ENCODE measurements at regions of chr1 and their contacts with region 1.

Region 1: DNA sequence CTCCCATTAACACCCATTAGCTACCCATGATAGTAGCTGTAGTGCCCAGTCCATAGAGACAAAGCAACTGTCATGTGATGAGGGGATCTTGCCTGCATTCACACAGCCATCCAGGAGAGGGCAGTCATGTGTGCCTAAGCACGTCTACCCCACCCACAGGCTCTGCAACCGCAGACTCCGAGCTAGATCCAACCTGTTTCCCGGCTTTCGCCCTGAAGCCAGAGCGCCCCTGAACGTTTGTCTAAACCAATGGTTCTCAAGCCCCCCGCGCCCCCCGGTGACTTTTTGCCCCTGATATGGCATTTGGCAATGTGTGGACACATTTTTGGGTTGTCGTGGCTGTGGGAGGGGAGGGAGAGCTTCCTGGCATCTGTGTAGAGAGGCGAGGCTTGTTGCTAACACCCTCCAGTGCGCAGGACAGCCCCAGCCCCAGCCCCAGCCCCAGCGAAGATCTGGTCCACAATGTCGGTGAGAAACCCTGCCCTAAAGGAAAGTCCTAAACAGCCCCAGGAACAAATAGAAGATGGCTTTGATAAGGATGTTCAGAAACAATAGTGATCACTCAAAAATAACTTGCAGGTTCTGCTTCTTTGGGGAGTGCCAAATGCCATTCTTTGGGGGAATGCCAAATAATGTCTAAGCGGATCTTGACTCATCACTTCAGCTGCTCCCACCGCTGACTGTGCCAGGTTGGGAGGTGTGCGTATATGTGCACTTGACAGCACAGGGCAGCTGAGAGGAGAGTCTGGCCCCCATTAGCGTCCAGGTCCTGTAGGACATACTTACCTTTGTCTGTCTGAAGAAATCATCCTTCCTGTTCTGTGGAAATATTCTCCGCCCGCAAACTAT is 34.5 kb downstream of the SLC44A3 start:
- DNase-seq: peak; percentile 94
- H3K4me3 ChIP-seq: peak overlapping the region in 2 of 3 experiments; percentile 20 to 27
- H3K27ac ChIP-seq: peak overlapping the region; percentile 57
- H3K4me1 ChIP-seq: peaks cover 16% of the 10 kb centered on the region
- H3K27me3 ChIP-seq: peaks cover 0 to 1% of the 10 kb centered on the region in 2 experiments
- CTCF ChIP-seq: peak; percentile 90 to 93
- POLR2A ChIP-seq: peak; percentile 48

Region 2: GRCh38 chr1:94522304-94522703 is 332.4 kb before region 1 on chr1:
- CTCF ChIA-PET with region 1: interaction called, 12 read pairs
- POLR2A ChIA-PET with region 1: no interaction called
- dilution Hi-C with region 1: no loop called
- intact Hi-C with region 1: no loop called
- DNase-seq: peak; percentile 52
- H3K4me3 ChIP-seq: no peak overlapping the region
- H3K27ac ChIP-seq: no peak overlapping the region
- H3K4me1 ChIP-seq: no peaks in the 10 kb centered on the region
- H3K27me3 ChIP-seq: no peaks in the 10 kb centered on the region
- CTCF ChIP-seq: peak in 1 of 2 donors; percentile 28
- POLR2A ChIP-seq: no peak

Region 3: DNA sequence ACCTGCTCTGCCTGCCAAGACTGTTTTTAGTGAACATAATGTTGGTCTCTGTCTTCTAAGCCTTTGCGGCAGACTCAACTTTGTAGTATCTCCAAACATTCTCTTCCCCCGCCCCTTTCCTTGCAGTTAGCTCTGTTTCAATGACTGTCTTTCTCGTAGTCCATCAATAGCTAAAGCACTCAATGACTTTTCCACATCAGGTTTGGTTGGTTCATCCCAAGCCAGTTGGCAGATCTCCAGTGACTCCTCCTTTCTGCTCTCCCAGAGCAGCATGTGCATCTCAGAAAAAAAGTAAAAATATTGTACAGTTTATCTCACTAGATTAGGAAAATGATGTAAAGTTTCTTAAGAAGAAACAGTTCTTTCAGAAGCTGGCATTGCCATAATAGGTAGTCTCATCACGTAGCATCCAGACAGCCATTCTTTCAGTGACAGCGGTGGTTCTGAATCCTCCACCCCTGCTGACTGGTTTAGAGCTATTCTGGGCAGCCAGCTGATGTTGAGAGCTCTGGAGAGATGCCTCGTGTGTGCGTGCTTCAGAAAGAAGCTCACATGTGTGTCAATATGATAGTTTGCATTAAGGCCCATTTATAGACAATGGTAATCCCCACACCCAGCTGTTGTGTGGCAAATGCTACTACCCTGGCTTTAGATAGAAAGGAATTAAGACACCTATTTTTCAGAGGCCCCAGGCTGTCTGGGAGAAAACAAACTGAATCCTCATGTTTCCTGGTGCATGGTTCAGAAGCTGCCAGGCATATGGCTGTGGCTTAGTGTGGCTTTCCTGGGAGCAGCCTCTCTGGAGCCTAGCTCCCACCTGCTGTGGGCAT is 19.1 kb after region 1 on chr1:
- CTCF ChIA-PET with region 1: interaction called, 39 read pairs
- POLR2A ChIA-PET with region 1: no interaction called
- dilution Hi-C with region 1: no loop called
- intact Hi-C with region 1: no loop called
- DNase-seq: no peak
- H3K4me3 ChIP-seq: no peak overlapping the region
- H3K27ac ChIP-seq: no peak overlapping the region
- H3K4me1 ChIP-seq: peaks cover 29% of the 10 kb centered on the region
- H3K27me3 ChIP-seq: no peaks in the 10 kb centered on the region
- CTCF ChIP-seq: no peak
- POLR2A ChIP-seq: no peak

Region 4: GRCh38 chr1:94903280-94904009 is 48.8 kb after region 1 on chr1:
- CTCF ChIA-PET with region 1: interaction called, 22 read pairs
- POLR2A ChIA-PET with region 1: interaction called, 3 read pairs
- dilution Hi-C with region 1: no loop called
- intact Hi-C with region 1: no loop called
- DNase-seq: no peak
- H3K4me3 ChIP-seq: no peak overlapping the region
- H3K27ac ChIP-seq: no peak overlapping the region
- H3K4me1 ChIP-seq: peaks cover 3% of the 10 kb centered on the region
- H3K27me3 ChIP-seq: no peaks in the 10 kb centered on the region
- CTCF ChIP-seq: no peak
- POLR2A ChIP-seq: no peak

Region 5: DNA sequence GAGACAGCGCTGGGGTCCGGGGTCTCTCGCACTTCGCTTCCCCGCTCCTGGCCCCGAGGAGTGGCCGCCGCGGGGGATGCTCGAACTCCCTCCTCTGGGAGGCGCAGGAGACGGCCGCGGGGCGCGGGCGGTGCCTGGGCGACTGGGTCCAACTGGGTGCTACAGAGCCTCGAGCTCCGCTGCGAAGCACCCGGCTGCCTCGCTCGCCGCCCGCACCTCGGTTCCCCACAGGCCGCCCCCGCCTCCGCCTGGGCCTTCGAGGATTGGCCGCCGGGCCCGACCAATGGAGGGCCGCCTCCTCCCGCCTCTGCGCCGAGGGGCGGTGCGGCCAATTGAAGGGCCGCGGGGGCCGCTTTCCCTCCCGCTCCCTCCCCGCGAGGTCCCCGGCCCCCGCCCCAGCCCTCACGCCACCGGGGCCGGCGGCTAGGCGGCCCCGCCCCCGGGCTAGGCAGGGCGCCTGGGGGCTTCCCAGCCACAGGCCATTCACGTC is 72.3 kb after region 1 on chr1 and contains the start of gene CNN3:
- CTCF ChIA-PET with region 1: interaction called, 52 read pairs
- POLR2A ChIA-PET with region 1: interaction called, 6 read pairs
- dilution Hi-C with region 1: no loop called
- intact Hi-C with region 1: loop called (anchors 1 kb)
- DNase-seq: peak; percentile 93
- H3K4me3 ChIP-seq: peak within 1 kb of the TSS; percentile 75 to 99 (median 90)
- H3K27ac ChIP-seq: peak within 1 kb of the TSS; percentile 100
- H3K4me1 ChIP-seq: peaks cover 49% of the 10 kb centered on the region
- H3K27me3 ChIP-seq: no peaks in the 10 kb centered on the region
- CTCF ChIP-seq: no peak
- POLR2A ChIP-seq: peak; percentile 93
- total RNA-seq, gene CNN3: 317 and 392 TPM in 2 replicates

Region 6: DNA sequence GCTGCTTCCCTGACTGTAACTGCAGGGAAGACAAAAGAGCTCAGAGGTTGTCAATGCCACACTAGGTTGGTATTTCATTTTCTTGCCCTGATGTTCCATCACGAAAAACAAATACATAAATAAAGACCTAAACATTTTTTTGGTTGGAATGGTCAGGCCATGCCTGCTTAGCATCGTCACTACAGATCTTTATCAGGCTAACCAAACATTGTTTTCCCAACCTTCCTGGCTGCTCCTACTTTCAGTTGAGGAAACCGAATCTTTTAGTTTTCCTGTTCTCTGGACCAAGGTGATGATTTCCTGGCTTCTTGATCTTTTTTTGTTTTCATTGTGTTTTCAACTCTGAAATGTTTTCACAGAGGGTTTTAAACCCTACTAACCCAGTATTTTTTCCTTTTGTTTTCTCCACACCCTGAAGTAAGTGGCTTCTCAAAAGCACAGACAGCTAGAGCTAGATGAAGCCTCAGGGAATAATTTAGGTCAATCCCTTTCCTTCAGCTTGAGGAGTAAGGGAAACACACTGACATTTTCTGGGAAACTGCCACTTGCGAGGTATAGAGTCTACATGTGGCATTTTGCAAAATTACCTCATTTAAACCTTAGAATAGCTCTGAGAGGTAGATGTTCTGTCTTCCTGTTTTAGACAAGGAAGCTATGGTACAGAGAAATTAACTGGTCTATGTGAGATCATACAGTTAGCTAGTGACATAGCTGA is 139.4 kb after region 1 on chr1:
- CTCF ChIA-PET with region 1: interaction called, 19 read pairs
- POLR2A ChIA-PET with region 1: no interaction called
- dilution Hi-C with region 1: no loop called
- intact Hi-C with region 1: no loop called
- DNase-seq: peak; percentile 64
- H3K4me3 ChIP-seq: no peak overlapping the region
- H3K27ac ChIP-seq: peak overlapping the region; percentile 30
- H3K4me1 ChIP-seq: peaks cover 25% of the 10 kb centered on the region
- H3K27me3 ChIP-seq: no peaks in the 10 kb centered on the region
- CTCF ChIP-seq: no peak
- POLR2A ChIP-seq: no peak

Region 7: GRCh38 chr1:95233737-95234500 is 379.2 kb after region 1 on chr1 and contains the start of gene RWDD3:
- CTCF ChIA-PET with region 1: interaction called, 8 read pairs
- POLR2A ChIA-PET with region 1: no interaction called
- dilution Hi-C with region 1: no loop called
- intact Hi-C with region 1: loop called (anchors 2 kb)
- DNase-seq: peak; percentile 91
- H3K4me3 ChIP-seq: peak within 1 kb of the TSS; percentile 71 to 99 (median 78)
- H3K27ac ChIP-seq: peak within 1 kb of the TSS; percentile 62
- H3K4me1 ChIP-seq: peaks cover 8% of the 10 kb centered on the region
- H3K27me3 ChIP-seq: peaks cover 5 to 9% of the 10 kb centered on the region in 2 experiments
- CTCF ChIP-seq: peak; percentile 69 to 80
- POLR2A ChIP-seq: peak; percentile 87
- total RNA-seq, gene RWDD3: 12.1 and 14.4 TPM in 2 replicates

Measured in endothelial cell of umbilical vein (primary cell).